ENCODE measurements at regions of chrX and their contacts with region 1.

Region 1: DNA sequence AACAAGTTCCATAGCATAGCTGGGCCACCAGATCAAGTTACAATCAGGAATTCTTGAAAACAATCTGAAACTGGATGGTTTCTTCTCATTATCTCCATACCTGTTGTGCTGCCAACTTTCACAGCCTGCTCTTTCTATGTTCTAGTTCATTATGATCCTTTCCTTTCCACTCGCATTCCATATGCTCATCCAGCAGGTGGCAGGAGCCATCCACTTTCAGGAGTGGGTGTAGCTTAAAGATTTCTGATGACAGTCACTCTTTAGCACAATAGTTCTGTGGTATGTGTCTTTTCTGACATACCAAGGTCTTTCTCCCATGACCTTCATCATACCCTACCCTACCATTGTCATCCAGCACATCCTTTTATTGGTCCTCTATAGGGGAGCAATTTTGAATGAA is 46.4 kb downstream of the PAGE2 start:
- DNase-seq: peak; percentile 8
- H3K4me3 ChIP-seq: no peak overlapping the region
- H3K27ac ChIP-seq: no peak overlapping the region
- H3K4me1 ChIP-seq: no peaks in the 10 kb centered on the region
- H3K27me3 ChIP-seq: no peaks in the 10 kb centered on the region
- CTCF ChIP-seq: peak; percentile 42 to 75

Region 2: GRCh38 chrX:55342533-55343501 is 207.6 kb after region 1 on chrX:
- CTCF ChIA-PET with region 1: no interaction called
- dilution Hi-C with region 1: no loop called
- in situ Hi-C with region 1: loop called in 1 of 2 experiments (anchors 25 kb)
- intact Hi-C with region 1: loop called (anchors 1 kb)
- DNase-seq: peak; percentile 55
- H3K4me3 ChIP-seq: no peak overlapping the region
- H3K27ac ChIP-seq: no peak overlapping the region
- H3K4me1 ChIP-seq: no peaks in the 10 kb centered on the region
- H3K27me3 ChIP-seq: no peaks in the 10 kb centered on the region
- CTCF ChIP-seq: peak; percentile 68 to 76

Region 3: GRCh38 chrX:55379396-55379795 is 244.2 kb after region 1 on chrX:
- CTCF ChIA-PET with region 1: no interaction called
- dilution Hi-C with region 1: no loop called
- in situ Hi-C with region 1: no loop called
- intact Hi-C with region 1: no loop called
- DNase-seq: no peak
- H3K4me3 ChIP-seq: no peak overlapping the region
- H3K27ac ChIP-seq: no peak overlapping the region
- H3K4me1 ChIP-seq: no peaks in the 10 kb centered on the region
- H3K27me3 ChIP-seq: no peaks in the 10 kb centered on the region
- CTCF ChIP-seq: no peak

Region 4: GRCh38 chrX:56268888-56269287 is 1133.7 kb after region 1 on chrX:
- CTCF ChIA-PET with region 1: no interaction called
- dilution Hi-C with region 1: no loop called
- in situ Hi-C with region 1: loop called in 1 of 2 experiments (anchors 25 kb)
- intact Hi-C with region 1: no loop called
- DNase-seq: peak; percentile 35
- H3K4me3 ChIP-seq: no peak overlapping the region
- H3K27ac ChIP-seq: no peak overlapping the region
- H3K4me1 ChIP-seq: no peaks in the 10 kb centered on the region
- H3K27me3 ChIP-seq: no peaks in the 10 kb centered on the region
- CTCF ChIP-seq: no peak